ENCODE measurements at regions of chr21 and their contacts with region 1.

Region 1: GRCh38 chr21:28745131-28746016 is 247.3 kb downstream of the LTN1 start:
- DNase-seq: peak; percentile 64
- ATAC-seq: peak; percentile 92
- H3K4me3 ChIP-seq: no peak overlapping the region
- H3K27ac ChIP-seq: no peak overlapping the region
- H3K4me1 ChIP-seq: peaks cover 0 to 5% of the 10 kb centered on the region in 2 experiments; a peak in 1 of 4 replicates
- H3K27me3 ChIP-seq: no peaks in the 10 kb centered on the region
- CTCF ChIP-seq: peak; percentile 46 to 93 (median 81); a peak in 5 of 6 replicates
- POLR2A ChIP-seq: no peak
- RAD21 ChIP-seq: peak; percentile 68

Region 2: DNA sequence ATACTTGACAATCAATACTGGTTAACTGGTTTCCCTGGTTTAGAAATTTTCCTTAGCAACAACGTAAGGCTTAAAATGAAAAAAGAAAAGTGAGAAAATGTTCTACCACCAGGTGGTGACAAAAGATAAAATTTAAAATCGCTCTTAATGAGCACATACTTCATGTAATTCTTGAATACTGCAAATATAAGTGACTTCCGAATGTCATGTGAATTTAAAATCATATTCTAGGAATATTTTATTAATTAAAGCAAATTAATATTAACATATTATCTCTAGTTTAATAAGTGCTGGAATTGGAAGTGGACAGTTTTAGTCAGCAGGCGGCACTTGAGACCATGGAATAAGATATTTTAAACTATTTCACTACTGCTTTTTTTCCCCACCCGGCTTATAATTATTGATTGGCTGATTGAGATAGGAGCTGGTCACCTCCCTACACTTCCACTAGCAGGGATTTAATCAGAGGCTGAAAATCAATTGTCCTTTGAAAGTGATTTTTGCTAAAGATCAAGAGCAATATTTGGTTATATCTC is 1895.2 kb before region 1 on chr21:
- CTCF ChIA-PET with region 1: interaction called, 7 read pairs
- POLR2A ChIA-PET with region 1: no interaction called
- RAD21 ChIA-PET with region 1: no interaction called
- intact Hi-C with region 1: loop called (anchors 1 kb)
- DNase-seq: peak; percentile 2
- ATAC-seq: no peak
- H3K4me3 ChIP-seq: no peak overlapping the region
- H3K27ac ChIP-seq: no peak overlapping the region
- H3K4me1 ChIP-seq: no peaks in the 10 kb centered on the region
- H3K27me3 ChIP-seq: no peaks in the 10 kb centered on the region
- CTCF ChIP-seq: peak in 2 of 3 experiments; percentile 38 to 45; a peak in 3 of 6 replicates
- POLR2A ChIP-seq: no peak
- RAD21 ChIP-seq: peak; percentile 23; the same call in 1 of the 2 replicates

Region 3: GRCh38 chr21:28069450-28069923 is 675.9 kb before region 1 on chr21:
- CTCF ChIA-PET with region 1: no interaction called
- POLR2A ChIA-PET with region 1: no interaction called
- RAD21 ChIA-PET with region 1: no interaction called
- intact Hi-C with region 1: loop called (anchors 10 kb)
- DNase-seq: no peak
- ATAC-seq: no peak
- H3K4me3 ChIP-seq: no peak overlapping the region
- H3K27ac ChIP-seq: no peak overlapping the region
- H3K4me1 ChIP-seq: no peaks in the 10 kb centered on the region
- H3K27me3 ChIP-seq: no peaks in the 10 kb centered on the region
- CTCF ChIP-seq: no peak
- POLR2A ChIP-seq: no peak
- RAD21 ChIP-seq: no peak

Region 4: DNA sequence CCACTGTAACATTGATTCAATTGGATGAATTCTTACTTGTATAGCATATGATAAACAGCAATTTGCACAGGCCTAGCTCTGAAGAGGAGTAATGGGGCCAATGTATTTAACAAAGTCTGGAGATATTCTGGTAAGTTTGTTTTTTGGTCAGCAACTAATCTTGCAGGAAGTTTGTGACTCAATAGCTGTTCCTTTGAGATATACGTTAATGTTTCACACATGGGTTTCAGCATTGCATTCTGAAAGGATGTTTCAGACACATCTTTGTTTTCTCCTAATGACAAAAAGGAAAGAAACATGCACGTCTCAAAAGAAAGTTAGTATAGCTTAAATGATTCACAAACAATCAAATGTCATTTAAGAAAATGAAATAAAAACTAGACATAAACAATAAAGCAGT is 198.3 kb after region 1 on chr21:
- CTCF ChIA-PET with region 1: interaction called, 9 read pairs
- POLR2A ChIA-PET with region 1: no interaction called
- RAD21 ChIA-PET with region 1: no interaction called
- intact Hi-C with region 1: loop called (anchors 5 kb)
- DNase-seq: no peak
- ATAC-seq: no peak
- H3K4me3 ChIP-seq: no peak overlapping the region
- H3K27ac ChIP-seq: no peak overlapping the region
- H3K4me1 ChIP-seq: no peaks in the 10 kb centered on the region
- H3K27me3 ChIP-seq: no peaks in the 10 kb centered on the region
- CTCF ChIP-seq: no peak
- POLR2A ChIP-seq: no peak
- RAD21 ChIP-seq: no peak

Measured in HCT116 (cell line).